Activated CD4-positive, alpha-beta T cell treated with anti-CD3 and anti-CD28 coated beads for 36 hours (primary cell): ENCODE measurements at regions of chr1 and their contacts with region 1.

Region 1: GRCh38 chr1:201511941-201512539 is 5.1 kb upstream of the CSRP1 start:
- DNase-seq: no peak
- ATAC-seq: no peak
- H3K4me3 Mint-ChIP-seq: no peak overlapping the region
- H3K27ac Mint-ChIP-seq: no peak overlapping the region
- H3K4me1 Mint-ChIP-seq: peaks cover 10% of the 10 kb centered on the region
- H3K27me3 Mint-ChIP-seq: no peaks in the 10 kb centered on the region

Region 2: DNA sequence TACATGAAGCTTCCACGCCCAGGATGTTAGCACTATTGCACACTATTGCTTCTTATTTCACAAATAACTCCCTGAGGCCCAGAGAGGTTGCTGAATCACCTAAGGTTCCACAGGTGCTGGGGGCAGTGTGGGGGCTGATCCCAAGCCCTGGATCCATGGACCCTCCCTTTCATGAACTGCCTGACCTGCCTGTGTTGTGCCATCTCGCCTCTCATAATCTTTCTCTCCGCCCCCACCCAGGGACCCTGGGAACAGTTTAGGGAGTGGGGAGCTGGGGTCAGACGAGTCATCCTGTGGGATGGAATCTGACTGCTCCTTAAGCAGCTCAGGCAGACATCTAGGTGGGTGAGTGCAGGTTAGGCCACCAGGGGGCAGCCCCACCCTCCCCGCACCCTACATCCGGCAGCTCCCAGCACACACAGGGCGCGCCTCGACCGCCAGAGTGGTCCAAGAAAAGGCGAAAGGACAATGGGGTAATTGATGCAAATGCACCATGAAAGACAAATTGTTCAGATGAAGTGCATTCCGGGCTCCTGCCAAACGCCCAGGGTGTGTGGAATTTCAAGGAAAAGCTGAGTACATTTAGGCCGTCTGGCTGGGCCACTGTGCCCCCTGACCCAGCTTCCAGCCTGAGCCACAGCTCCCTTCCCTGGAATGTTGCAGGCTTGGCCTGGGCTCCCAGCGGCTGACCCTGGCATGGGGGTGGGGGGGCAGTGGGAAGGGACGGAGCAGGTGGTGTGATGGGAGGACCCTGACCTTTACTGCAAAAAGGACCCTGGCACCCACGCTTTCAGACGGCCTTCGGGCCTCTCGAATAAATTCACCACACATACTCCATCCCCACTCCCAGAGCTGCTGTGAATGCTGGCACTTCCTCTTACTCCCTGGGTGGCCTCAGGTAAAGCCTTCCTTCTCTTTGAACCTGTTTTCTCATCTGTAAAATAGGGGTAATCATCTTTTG is 63.8 kb before region 1 on chr1:
- CTCF ChIA-PET with region 1: interaction called, 75 read pairs
- POLR2A ChIA-PET with region 1: no interaction called
- intact Hi-C with region 1: loop called (anchors 1 kb)
- DNase-seq: peak; percentile 85
- ATAC-seq: peak; percentile 98
- H3K4me3 Mint-ChIP-seq: no peak overlapping the region
- H3K27ac Mint-ChIP-seq: no peak overlapping the region
- H3K4me1 Mint-ChIP-seq: peaks cover 12% of the 10 kb centered on the region
- H3K27me3 Mint-ChIP-seq: peaks cover 9% of the 10 kb centered on the region

Region 3: GRCh38 chr1:201525197-201525778 is 13.2 kb after region 1 on chr1:
- CTCF ChIA-PET with region 1: interaction called, 25 read pairs
- POLR2A ChIA-PET with region 1: no interaction called
- intact Hi-C with region 1: no loop called
- DNase-seq: no peak
- ATAC-seq: no peak
- H3K4me3 Mint-ChIP-seq: no peak overlapping the region
- H3K27ac Mint-ChIP-seq: no peak overlapping the region
- H3K4me1 Mint-ChIP-seq: no peaks in the 10 kb centered on the region
- H3K27me3 Mint-ChIP-seq: no peaks in the 10 kb centered on the region

Region 4: GRCh38 chr1:201538612-201539551 is 26.8 kb after region 1 on chr1 and contains the start of gene NAV1:
- CTCF ChIA-PET with region 1: interaction called, 24 read pairs
- POLR2A ChIA-PET with region 1: no interaction called
- intact Hi-C with region 1: no loop called
- DNase-seq: peak; percentile 15
- ATAC-seq: peak; percentile 27
- H3K4me3 Mint-ChIP-seq: peak within 1 kb of the TSS; percentile 55
- H3K27ac Mint-ChIP-seq: no peak within 1 kb of the TSS
- H3K4me1 Mint-ChIP-seq: peaks cover 15% of the 10 kb centered on the region
- H3K27me3 Mint-ChIP-seq: peaks cover 62% of the 10 kb centered on the region
- total RNA-seq, gene NAV1: 1.9 to 2.6 TPM

Region 5: GRCh38 chr1:201619513-201619912 is 107.5 kb after region 1 on chr1:
- CTCF ChIA-PET with region 1: no interaction called
- POLR2A ChIA-PET with region 1: no interaction called
- intact Hi-C with region 1: no loop called
- DNase-seq: no peak
- ATAC-seq: no peak
- H3K4me3 Mint-ChIP-seq: no peak overlapping the region
- H3K27ac Mint-ChIP-seq: no peak overlapping the region
- H3K4me1 Mint-ChIP-seq: no peaks in the 10 kb centered on the region
- H3K27me3 Mint-ChIP-seq: peaks cover 2% of the 10 kb centered on the region